Activated CD4-positive, alpha-beta memory T cell treated with anti-CD3 and anti-CD28 coated beads for 36 hours (primary cell): ENCODE measurements at regions of chr3 and their contacts with region 1.

Region 1: DNA sequence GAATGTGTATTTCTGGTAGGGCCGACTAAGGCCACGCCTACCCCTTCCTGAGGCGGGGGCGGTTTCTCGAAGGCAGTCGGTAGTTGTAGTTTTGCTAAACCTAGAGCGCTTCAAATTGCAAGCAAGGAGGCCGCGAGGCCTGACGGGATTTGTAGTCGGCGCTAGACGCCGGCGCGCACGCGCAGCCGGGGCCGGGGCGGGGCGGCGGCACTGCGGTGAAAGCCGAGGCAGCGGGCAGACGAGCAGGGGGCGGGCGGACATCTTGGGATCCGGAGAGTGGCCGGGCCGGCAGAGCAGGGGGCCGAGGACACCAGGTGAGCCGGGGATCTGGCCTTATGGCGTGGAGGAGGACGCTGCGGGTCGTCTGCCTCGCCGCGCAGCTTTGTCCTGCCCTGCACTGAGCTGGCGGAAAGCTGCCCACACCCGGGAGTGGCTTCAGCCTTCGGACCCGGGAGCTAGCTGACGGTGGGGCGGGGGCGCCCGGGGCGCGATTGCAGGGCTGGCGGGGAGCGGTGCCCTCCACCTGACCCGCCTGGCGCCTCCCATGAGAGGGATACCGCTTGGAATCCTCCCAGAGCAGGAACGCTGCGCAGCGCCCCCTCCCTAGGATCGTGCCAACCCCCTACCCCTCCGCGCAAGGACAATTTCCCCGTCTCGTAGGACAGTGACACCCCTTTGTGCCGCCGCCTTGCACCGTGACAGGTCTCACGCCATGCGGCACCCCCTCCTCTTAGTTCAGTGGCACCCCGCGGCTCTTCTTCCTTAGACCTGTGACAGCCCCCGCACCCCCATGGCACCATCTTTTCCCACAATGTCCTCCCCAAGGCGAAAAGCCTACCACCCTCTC is at the start of gene AP2M1:
- DNase-seq: peak; percentile 99
- H3K4me3 Mint-ChIP-seq: peak within 1 kb of the TSS; percentile 98
- H3K27ac Mint-ChIP-seq: peak within 1 kb of the TSS; percentile 67
- H3K4me1 Mint-ChIP-seq: peaks cover 25% of the 10 kb centered on the region
- H3K27me3 Mint-ChIP-seq: no peaks in the 10 kb centered on the region
- total RNA-seq, gene AP2M1: 218 to 221 TPM

Region 2: DNA sequence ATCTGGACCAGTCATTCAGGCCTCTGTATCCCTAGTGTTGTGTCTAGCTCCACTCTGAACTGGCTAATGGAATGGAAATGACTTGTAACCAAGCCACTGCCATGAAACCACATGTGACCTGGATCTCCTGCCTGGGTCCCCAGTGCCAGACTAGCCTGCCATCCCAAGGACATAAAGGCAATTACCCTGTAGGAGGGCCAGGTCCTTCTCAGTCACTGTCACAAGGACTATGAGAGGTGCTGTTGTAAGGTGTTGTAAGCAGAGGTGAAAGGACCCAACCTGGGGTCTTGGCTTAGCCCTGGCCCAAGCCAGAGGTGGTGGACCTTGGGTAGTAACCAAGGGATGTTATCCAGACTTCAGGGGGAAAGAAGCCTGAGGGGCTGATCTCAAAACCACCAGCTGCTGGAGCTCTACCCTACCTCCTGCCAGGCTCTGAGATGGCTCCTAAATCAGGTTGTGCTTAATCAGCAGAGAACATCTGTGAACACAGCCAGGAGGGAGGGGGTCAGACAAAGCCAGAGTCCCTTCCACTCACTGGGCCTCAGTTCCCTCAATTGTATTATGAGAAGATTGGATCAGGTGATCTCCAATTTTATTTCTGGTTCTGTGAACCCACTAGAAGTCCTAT is 555.1 kb before region 1 on chr3:
- CTCF ChIA-PET with region 1: no interaction called
- POLR2A ChIA-PET with region 1: no interaction called
- intact Hi-C with region 1: no loop called
- DNase-seq: no peak
- H3K4me3 Mint-ChIP-seq: no peak overlapping the region
- H3K27ac Mint-ChIP-seq: no peak overlapping the region
- H3K4me1 Mint-ChIP-seq: no peaks in the 10 kb centered on the region
- H3K27me3 Mint-ChIP-seq: no peaks in the 10 kb centered on the region

Region 3: GRCh38 chr3:183697610-183698317 is 477.1 kb before region 1 on chr3 and contains the start of gene YEATS2:
- CTCF ChIA-PET with region 1: no interaction called
- POLR2A ChIA-PET with region 1: no interaction called
- intact Hi-C with region 1: loop called (anchors 5 kb)
- DNase-seq: peak; percentile 88
- H3K4me3 Mint-ChIP-seq: peak within 1 kb of the TSS; percentile 82
- H3K27ac Mint-ChIP-seq: peak within 1 kb of the TSS; percentile 86
- H3K4me1 Mint-ChIP-seq: peaks cover 32% of the 10 kb centered on the region
- H3K27me3 Mint-ChIP-seq: no peaks in the 10 kb centered on the region
- total RNA-seq, gene YEATS2: 45.4 to 48.8 TPM

Region 4: DNA sequence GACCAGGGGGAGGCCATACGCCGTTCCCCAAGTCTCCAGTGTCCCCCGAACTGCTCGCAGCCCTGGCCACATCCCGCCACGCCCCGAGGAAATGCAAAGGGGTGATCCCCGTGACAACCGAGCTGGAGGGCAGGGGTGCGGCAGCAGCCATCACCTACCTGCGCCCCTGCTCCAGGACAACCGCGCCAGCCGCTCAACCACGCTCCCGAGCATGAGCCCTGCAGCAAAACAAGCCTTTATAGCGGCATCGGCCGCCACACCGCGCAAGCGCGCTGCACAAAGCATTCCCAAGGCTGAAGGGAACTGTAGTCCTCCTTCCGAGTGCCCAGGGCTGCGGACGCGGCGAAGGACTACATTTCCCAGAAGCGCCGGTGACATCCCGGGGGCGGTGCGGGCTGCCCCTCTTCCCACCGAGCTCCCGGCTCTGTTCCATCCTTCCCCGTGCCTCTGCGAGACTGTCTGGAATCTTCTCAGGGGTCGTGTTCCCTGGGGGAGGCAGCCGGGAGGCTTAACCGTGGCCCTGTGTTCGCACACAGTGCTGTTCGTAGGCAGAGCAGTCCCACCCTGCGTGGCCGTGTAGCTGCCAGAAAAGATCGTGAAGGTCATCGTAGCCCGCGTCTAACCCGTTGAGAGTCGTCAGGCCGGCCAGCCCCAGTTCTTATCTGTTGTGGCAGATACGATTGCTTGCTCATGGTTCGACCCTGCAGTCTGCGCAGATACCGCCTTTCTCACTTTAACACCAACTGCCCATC is 157.0 kb before region 1 on chr3 and contains the start of gene ABCC5:
- CTCF ChIA-PET with region 1: no interaction called
- POLR2A ChIA-PET with region 1: no interaction called
- intact Hi-C with region 1: loop called (anchors 1 kb)
- DNase-seq: peak; percentile 89
- H3K4me3 Mint-ChIP-seq: peak within 1 kb of the TSS; percentile 99
- H3K27ac Mint-ChIP-seq: peak within 1 kb of the TSS; percentile 85
- H3K4me1 Mint-ChIP-seq: peaks cover 23% of the 10 kb centered on the region
- H3K27me3 Mint-ChIP-seq: peaks cover 5% of the 10 kb centered on the region
- total RNA-seq, gene ABCC5: 13.3 to 15.6 TPM

Region 5: DNA sequence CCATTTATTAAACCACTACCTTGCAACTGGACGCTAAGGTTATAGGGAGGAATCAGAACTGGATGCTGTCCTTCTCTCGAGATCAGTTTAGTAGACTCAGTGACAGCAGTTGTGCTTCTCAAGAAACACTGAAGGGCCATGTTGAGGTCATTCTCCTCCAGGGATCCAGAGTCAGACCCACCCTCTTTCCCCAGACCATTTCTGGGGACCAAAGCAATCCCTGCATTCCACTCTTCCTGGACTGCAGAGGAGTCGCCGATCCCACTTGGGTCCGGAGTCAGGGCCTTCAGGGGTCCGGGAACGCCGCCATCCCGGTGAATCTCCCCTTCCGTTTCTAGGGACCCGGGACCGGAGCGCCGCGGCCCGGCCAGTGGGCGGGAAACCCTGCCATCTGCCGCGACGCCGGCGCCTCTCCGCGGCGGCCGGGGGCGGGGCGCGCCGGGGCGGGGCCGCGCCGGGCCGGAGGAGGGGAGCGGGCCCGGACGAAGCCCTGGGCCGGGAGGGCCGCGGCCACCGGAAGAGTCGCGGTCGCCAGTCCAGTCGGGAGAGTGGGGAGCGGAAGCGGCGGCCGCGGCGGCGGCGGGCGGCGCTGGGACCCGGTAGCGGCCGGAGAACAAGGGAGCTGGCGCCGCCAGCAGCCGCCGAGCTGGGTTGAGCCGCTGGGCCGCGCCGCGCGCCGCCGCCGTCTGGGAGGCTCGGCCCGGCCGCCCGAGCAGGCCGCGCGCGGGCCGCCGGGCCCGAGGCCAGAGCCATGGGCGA is 19.8 kb before region 1 on chr3 and contains the start of gene DVL3:
- CTCF ChIA-PET with region 1: no interaction called
- POLR2A ChIA-PET with region 1: no interaction called
- intact Hi-C with region 1: loop called (anchors 2 kb)
- DNase-seq: peak; percentile 57
- H3K4me3 Mint-ChIP-seq: peak within 1 kb of the TSS; percentile 95
- H3K27ac Mint-ChIP-seq: peak within 1 kb of the TSS; percentile 60
- H3K4me1 Mint-ChIP-seq: peaks cover 18% of the 10 kb centered on the region
- H3K27me3 Mint-ChIP-seq: no peaks in the 10 kb centered on the region
- total RNA-seq, gene DVL3: 28.5 to 32.4 TPM

Region 6: GRCh38 chr3:184185461-184186308 is 10.8 kb after region 1 on chr3 and contains the start of gene ABCF3:
- CTCF ChIA-PET with region 1: no interaction called
- POLR2A ChIA-PET with region 1: interaction called, 6 read pairs
- intact Hi-C with region 1: loop called (anchors 1 kb)
- DNase-seq: peak; percentile 99
- H3K4me3 Mint-ChIP-seq: peak within 1 kb of the TSS; percentile 96
- H3K27ac Mint-ChIP-seq: peak within 1 kb of the TSS; percentile 92
- H3K4me1 Mint-ChIP-seq: peaks cover 29% of the 10 kb centered on the region
- H3K27me3 Mint-ChIP-seq: no peaks in the 10 kb centered on the region
- total RNA-seq, gene ABCF3: 41.2 to 48.7 TPM

Region 7: DNA sequence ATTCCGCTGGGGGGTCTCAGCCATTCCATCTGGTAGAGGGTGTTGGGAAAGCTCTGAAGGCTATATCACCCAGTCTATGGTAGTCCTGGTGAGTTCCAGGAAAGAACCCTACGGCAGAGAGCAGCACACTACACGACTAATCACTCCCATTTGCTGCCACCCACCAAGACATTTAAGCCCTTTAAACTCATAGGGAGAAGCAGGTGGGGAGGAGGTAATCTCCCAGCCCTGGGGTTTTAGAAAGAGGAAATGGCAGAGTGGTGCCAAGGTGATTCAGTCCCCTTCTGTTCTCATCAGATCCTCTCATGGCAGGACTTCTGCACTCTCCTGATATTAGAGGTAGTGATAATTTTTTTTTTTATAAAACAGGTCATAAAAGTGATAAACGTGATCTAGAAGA is 43.9 kb after region 1 on chr3:
- CTCF ChIA-PET with region 1: no interaction called
- POLR2A ChIA-PET with region 1: no interaction called
- intact Hi-C with region 1: no loop called
- DNase-seq: no peak
- H3K4me3 Mint-ChIP-seq: no peak overlapping the region
- H3K27ac Mint-ChIP-seq: no peak overlapping the region
- H3K4me1 Mint-ChIP-seq: no peaks in the 10 kb centered on the region
- H3K27me3 Mint-ChIP-seq: peaks cover 7% of the 10 kb centered on the region

Region 8: GRCh38 chr3:184611607-184612281 is 436.9 kb after region 1 on chr3:
- CTCF ChIA-PET with region 1: no interaction called
- POLR2A ChIA-PET with region 1: no interaction called
- intact Hi-C with region 1: no loop called
- DNase-seq: no peak
- H3K4me3 Mint-ChIP-seq: no peak overlapping the region
- H3K27ac Mint-ChIP-seq: no peak overlapping the region
- H3K4me1 Mint-ChIP-seq: peaks cover 15% of the 10 kb centered on the region
- H3K27me3 Mint-ChIP-seq: peaks cover 1% of the 10 kb centered on the region